Posterior cingulate gyrus (tissue), 11 donors: ENCODE measurements at regions of chr4 and their contacts with region 1.

Region 1: DNA sequence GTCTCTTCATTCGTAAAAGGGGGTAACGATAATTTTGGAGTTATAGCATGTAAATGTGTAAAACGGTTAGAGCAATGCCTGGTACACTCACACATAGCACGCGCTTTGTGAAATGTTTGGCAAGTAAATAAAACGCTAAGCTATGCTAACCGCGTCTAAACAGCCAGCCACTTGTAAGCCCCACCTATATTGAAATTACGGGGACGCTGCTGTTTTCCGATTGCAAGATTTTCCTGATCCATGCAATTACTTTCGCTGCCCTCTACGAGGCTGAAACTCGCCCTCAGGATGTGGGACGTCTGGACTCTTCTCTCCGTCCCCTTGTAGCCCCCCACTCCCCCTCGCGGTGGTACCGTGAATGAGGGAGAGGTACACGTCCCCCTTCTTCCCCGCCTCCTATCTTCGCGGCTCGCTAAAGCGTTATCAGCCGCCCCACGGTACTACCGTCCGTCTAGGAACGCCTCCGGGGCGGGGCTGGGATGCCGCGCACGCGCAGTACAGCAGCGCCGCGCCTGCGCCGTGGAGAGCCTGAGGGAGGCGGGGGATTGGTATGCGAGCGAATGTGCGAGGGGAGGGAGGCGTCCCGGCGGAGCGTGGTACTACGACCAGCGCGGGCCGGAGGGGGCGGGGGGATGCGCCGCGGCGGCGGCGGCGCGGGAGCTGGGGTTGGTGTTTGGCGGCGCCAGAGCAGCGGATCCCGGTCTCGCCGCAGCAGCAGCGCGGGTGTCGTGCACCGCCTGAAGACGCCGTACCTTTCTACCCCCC is at the start of gene STIM2:
- DNase-seq: peak; percentile 92 to 99 (median 97)

Region 2: DNA sequence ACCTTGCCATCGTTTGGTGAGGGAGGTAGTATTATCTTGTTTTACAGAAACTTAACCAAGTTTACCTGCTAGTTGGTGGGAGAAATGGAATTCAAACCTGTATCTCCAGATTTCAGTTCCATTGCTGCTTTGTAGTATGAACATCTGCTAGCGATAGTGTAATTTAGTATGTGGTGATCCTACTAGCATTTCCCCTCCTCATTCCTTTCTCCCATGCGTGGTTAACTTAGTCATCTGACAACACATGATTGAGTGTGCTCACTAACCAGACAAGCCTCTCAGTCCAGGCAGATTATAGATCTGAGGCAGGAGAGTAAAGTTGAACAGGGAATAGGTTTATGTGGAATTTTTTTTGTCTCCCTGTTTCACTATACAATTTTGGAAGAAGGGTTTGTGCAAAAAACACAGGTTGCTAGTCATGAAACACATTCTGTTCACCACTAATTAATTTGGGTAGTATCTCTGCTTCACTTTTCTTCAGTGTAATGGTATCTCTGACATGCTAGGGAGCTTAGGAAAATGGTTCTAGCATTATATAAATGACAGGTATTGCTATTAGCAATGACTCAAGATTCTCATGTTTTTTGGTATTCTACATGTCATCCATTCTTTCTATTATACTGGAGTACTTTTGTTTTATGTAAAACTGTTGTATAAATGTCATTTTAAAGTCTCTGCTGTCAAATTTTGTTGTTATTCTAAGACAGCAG is 517.9 kb before region 1 on chr4:
- intact Hi-C with region 1: loop called (anchors 10 kb)
- DNase-seq: no peak

Region 3: DNA sequence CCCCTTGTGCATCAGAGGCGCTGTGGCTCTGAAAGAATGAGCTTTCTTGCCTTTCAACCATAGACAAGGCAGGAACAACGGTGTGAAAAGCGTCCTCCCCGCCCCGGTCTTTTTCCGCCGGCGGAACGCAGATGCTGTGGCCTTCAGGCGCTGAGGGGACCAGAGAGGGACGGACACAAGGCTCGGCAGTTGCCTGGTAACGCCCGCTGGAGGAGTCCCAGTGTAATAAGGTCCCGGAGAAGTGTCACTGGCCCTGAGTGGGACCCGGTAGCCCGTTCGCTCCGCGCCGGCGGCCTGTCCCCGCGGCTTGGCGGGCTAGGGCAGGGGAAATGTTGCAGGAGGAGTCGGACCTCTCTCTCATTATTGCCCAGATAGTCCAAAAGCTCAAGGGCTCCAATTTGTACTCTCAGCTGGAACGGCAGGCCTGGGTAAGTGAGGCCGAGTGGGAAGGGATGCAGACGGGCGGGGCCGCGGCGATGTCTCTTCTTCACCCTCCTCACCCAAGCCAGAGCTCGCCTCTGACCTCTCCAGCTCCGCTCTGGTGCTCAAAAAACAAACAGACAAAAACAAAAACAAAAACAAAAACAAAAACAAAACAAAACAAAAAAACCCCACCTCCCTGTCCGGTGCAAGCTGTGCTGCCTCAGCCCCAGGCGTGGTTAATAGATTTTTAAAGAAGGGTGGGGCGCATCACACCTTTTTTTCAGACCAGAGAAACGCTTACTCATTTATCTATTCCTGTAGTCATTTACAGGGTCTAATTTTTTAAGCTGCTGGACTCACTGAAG is 276.3 kb before region 1 on chr4 and contains the start of gene TBC1D19:
- intact Hi-C with region 1: loop called (anchors 5 kb)
- DNase-seq: peak; percentile 86 to 98 (median 89)

Region 4: DNA sequence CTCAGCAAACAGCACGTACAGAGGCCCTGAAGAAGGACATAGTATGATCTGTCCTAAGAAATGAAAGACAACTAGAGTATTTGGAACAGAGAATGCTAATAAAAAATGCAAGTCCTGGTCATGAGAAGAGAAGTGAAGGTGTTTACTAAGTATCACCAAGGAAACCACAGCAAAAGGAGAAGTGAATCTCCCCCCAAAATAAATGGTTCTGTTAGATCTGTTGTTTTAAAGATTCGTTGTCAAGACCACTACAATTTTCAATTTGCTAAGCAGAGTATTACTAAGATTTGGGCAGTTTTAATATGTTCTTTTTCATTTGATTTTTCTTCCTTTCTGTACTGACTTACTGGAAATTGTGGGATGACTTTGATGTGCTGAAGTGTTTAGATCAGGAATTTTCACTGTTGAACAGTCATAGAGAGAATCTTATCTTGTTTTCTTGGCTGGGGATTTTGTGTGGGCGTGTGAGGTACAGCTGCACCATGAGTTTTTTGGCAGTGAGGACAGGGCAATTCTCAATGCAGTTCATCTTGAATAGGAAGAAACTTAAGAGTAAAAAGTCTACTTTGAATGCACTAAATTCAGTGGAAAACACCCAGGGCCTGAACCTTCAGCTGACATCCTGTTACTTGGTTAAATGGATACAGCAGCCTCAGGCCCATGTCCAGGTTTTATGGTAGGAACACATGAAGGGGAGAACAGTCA is 132.5 kb after region 1 on chr4:
- intact Hi-C with region 1: loop called (anchors 5 kb)
- DNase-seq: peak in 9 of 10 donors; percentile 15 to 88 (median 38)

Region 5: DNA sequence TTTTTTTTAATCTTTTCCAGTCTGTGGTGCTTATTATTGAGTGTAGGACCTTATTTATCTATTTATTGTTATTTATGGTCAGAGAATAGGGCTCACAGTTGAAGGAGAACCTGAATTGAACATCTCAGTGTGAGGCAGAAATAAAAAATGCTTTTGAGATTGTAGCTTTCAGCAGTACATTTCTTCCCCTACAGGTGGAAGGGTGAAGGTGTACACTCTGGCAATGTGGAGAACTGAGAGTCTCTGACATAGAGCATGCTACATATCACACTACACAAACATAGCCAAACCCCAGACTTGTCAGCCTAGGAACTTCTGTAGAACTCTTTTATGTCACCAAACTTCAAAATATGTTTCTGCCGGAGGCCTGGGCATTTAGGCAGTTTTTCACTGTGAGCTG is 140.5 kb after region 1 on chr4:
- intact Hi-C with region 1: loop called (anchors 5 kb)
- DNase-seq: no peak